Motor neuron (in vitro differentiated cells): ENCODE measurements at regions of chr11 and their contacts with region 1.

Region 1: GRCh38 chr11:112942966-112943643 is 18.1 kb upstream of the NCAM1 start:
- ATAC-seq: no peak
- H3K4me3 ChIP-seq: no peak overlapping the region
- H3K27ac ChIP-seq: no peak overlapping the region
- H3K4me1 ChIP-seq: peaks cover 22 to 37% of the 10 kb centered on the region in 2 donors

Region 2: GRCh38 chr11:112613051-112613972 is 329.8 kb before region 1 on chr11:
- in situ Hi-C with region 1: loop called in 1 of 9 experiments (anchors 10 kb)
- ATAC-seq: peak; percentile 67 to 86 (median 77)
- H3K4me3 ChIP-seq: no peak overlapping the region
- H3K27ac ChIP-seq: peak overlapping the region; percentile 0 to 52
- H3K4me1 ChIP-seq: peaks cover 59 to 87% of the 10 kb centered on the region in 2 donors